ENCODE measurements at regions of chr1 and their contacts with region 1.

Region 1: GRCh38 chr1:168082008-168082876 is 54.5 kb downstream of the GPR161 start:
- DNase-seq: peak; percentile 43 to 76 (median 55)
- ATAC-seq: peak; percentile 92
- H3K4me3 ChIP-seq: no peak overlapping the region
- H3K4me3 Mint-ChIP-seq: no peak overlapping the region
- H3K27ac ChIP-seq: no peak overlapping the region
- H3K27ac Mint-ChIP-seq: no peak overlapping the region
- H3K4me1 ChIP-seq: peaks cover 5% of the 10 kb centered on the region
- H3K4me1 Mint-ChIP-seq: no peaks in the 10 kb centered on the region
- H3K27me3 ChIP-seq: no peaks in the 10 kb centered on the region
- H3K27me3 Mint-ChIP-seq: no peaks in the 10 kb centered on the region
- CTCF ChIP-seq: peak; percentile 92

Region 2: DNA sequence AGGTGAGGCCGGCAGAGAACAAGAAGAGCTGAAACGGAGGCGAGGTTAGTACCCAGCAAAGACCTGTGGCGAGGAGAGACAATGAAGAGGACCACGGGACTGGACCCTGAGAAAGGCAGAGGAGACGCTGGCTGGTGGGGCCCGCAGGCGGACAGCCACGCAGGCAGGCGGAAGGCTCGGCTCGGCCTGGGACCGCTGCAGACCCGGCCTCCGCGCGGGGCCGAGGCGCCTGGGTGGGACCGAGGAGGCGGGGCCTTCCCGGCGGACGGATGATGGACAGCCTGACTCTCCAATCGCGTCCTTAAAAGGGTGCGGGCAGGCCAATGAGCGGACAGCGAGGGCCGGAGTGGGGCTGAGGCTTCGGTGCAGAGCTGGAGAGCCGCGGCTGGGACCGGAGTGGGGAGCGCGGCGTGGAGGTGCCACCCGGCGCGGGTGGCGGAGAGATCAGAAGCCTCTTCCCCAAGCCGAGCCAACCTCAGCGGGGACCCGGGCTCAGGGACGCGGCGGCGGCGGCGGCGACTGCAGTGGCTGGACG is 360.6 kb before region 1 on chr1 and contains the start of gene MPZL1:
- CTCF ChIA-PET with region 1: no interaction called
- POLR2A ChIA-PET with region 1: no interaction called
- intact Hi-C with region 1: loop called in 1 of 2 experiments (anchors 10 kb)
- DNase-seq: peak; percentile 81 to 94 (median 88)
- ATAC-seq: peak; percentile 94
- H3K4me3 ChIP-seq: peak within 1 kb of the TSS; percentile 71
- H3K4me3 Mint-ChIP-seq: peak within 1 kb of the TSS; percentile 90
- H3K27ac ChIP-seq: no peak within 1 kb of the TSS
- H3K27ac Mint-ChIP-seq: peak within 1 kb of the TSS; percentile 73
- H3K4me1 ChIP-seq: peaks cover 32% of the 10 kb centered on the region
- H3K4me1 Mint-ChIP-seq: peaks cover 72% of the 10 kb centered on the region
- H3K27me3 ChIP-seq: no peaks in the 10 kb centered on the region
- H3K27me3 Mint-ChIP-seq: no peaks in the 10 kb centered on the region
- CTCF ChIP-seq: no peak
- total RNA-seq, gene MPZL1: 1.2 to 1.5 TPM

Region 3: DNA sequence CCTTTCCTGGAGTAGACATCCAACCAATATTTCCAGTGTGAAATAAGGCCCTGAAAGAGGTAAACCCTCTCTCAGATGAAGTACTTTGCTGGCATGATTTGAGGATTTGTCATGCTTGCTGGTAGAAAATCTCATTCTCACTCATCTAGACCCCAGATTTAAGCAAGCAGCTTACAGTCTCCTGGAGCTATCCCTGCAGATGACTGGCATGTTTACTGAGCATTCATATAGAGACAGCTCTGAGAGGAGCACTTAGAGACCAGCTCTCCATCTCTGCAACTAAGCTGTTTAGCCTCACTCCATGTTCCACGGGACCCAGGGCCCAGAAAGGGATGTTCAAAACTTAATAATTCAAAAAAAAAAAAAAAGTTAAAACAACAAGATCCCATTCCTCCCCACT is 20.2 kb after region 1 on chr1:
- CTCF ChIA-PET with region 1: no interaction called
- POLR2A ChIA-PET with region 1: no interaction called
- intact Hi-C with region 1: no loop called
- DNase-seq: no peak
- ATAC-seq: no peak
- H3K4me3 ChIP-seq: no peak overlapping the region
- H3K4me3 Mint-ChIP-seq: no peak overlapping the region
- H3K27ac ChIP-seq: no peak overlapping the region
- H3K27ac Mint-ChIP-seq: no peak overlapping the region
- H3K4me1 ChIP-seq: no peaks in the 10 kb centered on the region
- H3K4me1 Mint-ChIP-seq: no peaks in the 10 kb centered on the region
- H3K27me3 ChIP-seq: no peaks in the 10 kb centered on the region
- H3K27me3 Mint-ChIP-seq: no peaks in the 10 kb centered on the region
- CTCF ChIP-seq: no peak

Region 4: DNA sequence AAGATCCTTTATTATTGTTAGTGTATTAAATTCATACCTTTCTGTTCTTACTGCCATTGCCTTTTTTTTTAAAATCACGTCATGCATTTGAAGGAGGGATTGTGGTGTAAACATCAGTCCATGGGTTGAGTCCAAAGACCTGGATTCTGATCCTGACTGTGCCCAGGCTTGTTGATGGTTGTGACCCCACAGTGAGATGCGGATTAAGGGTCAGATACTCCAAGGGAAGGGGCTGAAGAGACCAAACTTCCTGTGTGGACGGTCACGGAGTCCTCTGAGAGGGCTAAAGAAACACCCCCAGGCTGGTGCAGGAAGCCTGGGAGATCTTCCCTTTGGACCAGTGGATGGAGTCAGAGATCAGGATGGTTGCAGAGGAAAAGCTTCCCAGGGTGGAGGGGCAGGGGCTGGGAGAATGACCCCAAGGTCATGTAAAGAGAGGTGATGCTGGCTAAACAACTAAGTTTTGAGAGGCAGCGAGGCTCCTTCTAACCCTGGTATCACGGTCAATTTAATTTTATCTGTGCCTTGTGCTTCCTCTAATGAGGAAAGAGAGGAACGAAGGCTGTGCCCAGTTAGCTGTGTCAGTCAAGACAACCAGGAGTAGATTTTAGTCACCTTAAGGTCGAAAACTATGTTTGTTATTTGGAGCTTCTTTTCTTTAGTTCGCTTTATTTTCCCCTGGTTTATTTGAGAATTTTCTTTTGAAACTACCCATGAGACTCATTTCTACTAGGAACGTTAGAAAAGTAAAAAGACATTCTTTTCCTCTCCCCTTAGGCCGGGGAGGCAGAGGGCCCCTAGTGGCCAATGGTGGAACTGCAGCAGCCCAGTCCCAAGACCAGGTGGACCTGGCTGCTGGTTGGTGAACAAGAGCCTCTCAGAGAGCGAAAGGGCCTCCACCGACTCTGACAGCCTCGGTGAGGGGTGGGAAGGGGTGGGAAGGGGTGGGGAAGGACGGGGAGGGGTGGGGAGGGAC is 63.2 kb after region 1 on chr1:
- CTCF ChIA-PET with region 1: no interaction called
- POLR2A ChIA-PET with region 1: no interaction called
- intact Hi-C with region 1: loop called in 1 of 2 experiments (anchors 5 kb)
- DNase-seq: peak; percentile 70 to 90 (median 80)
- ATAC-seq: peak; percentile 95
- H3K4me3 ChIP-seq: no peak overlapping the region
- H3K4me3 Mint-ChIP-seq: peak overlapping the region; percentile 31
- H3K27ac ChIP-seq: no peak overlapping the region
- H3K27ac Mint-ChIP-seq: no peak overlapping the region
- H3K4me1 ChIP-seq: peaks cover 6% of the 10 kb centered on the region
- H3K4me1 Mint-ChIP-seq: peaks cover 14% of the 10 kb centered on the region
- H3K27me3 ChIP-seq: no peaks in the 10 kb centered on the region
- H3K27me3 Mint-ChIP-seq: no peaks in the 10 kb centered on the region
- CTCF ChIP-seq: peak; percentile 87

Region 5: GRCh38 chr1:169348383-169349036 is 1266.3 kb after region 1 on chr1:
- CTCF ChIA-PET with region 1: interaction called, 4 read pairs
- POLR2A ChIA-PET with region 1: no interaction called
- intact Hi-C with region 1: loop called in 1 of 2 experiments (anchors 10 kb)
- DNase-seq: peak in 4 of 14 experiments; percentile 38 to 79 (median 68)
- ATAC-seq: peak; percentile 46
- H3K4me3 ChIP-seq: no peak overlapping the region
- H3K4me3 Mint-ChIP-seq: no peak overlapping the region
- H3K27ac ChIP-seq: no peak overlapping the region
- H3K27ac Mint-ChIP-seq: no peak overlapping the region
- H3K4me1 ChIP-seq: no peaks in the 10 kb centered on the region
- H3K4me1 Mint-ChIP-seq: no peaks in the 10 kb centered on the region
- H3K27me3 ChIP-seq: no peaks in the 10 kb centered on the region
- H3K27me3 Mint-ChIP-seq: no peaks in the 10 kb centered on the region
- CTCF ChIP-seq: peak; percentile 92

Measured in CD4-positive, alpha-beta T cell (primary cell).